ENCODE measurements at regions of chr14 and their contacts with region 1.

Region 1: GRCh38 chr14:55411426-55412389 is at the start of gene ATG14:
- DNase-seq: peak; percentile 73
- ATAC-seq: peak; percentile 99
- H3K4me3 Mint-ChIP-seq: peak within 1 kb of the TSS; percentile 93
- H3K27ac Mint-ChIP-seq: peak within 1 kb of the TSS; percentile 76
- H3K4me1 Mint-ChIP-seq: peaks cover 32% of the 10 kb centered on the region
- H3K27me3 Mint-ChIP-seq: peaks cover 12% of the 10 kb centered on the region
- CTCF ChIP-seq: no peak
- total RNA-seq, gene ATG14: 9.7 and 12.1 TPM in 2 replicates

Region 2: DNA sequence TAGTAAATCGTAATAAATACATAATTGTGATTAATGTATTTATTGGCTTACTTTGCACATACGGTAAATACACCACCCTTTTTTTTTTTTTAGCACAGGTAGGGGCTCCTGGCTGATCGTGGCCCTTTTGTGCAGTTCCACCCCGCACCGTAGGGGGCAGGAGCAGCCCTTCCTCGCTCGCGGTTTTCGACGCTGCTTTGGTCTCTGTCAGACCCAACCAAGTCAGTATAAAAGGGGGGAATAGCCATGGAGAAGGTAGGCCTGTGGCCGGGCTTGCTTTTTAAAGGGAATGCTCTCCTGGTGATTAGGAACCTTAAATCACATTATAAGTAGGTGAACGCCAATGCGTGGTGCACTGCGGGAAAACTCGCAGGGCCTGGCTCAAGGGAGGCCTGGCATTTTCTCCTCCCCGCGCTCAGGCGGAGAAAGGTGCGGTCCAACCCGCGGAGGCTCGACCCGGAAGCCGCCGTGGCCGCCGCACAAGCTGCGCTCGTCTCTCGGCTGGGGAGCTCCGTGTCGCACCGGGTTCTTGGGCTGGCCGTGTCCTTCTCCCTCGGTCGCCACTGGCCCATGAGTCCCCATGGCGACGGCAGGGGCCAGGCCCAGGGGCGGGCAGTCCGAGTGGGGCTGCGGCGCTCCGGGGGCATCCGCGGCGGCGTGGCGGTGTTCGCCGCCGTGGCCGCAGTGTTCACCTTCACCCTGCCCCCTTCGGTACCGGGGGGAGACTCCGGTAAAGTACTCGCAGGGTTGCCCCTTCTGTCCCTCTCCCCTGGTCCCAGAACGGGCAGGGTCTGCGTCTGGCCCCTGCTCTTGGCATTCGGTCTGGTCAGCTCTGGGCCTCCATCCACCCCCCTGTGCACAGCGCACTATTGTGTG is 1167.9 kb after region 1 on chr14 and contains the start of gene TMEM260:
- CTCF ChIA-PET with region 1: no interaction called
- POLR2A ChIA-PET with region 1: no interaction called
- intact Hi-C with region 1: loop called (anchors 5 kb)
- DNase-seq: peak; percentile 87
- ATAC-seq: peak; percentile 94
- H3K4me3 Mint-ChIP-seq: peak within 1 kb of the TSS; percentile 90
- H3K27ac Mint-ChIP-seq: peak within 1 kb of the TSS; percentile 96
- H3K4me1 Mint-ChIP-seq: peaks cover 35% of the 10 kb centered on the region
- H3K27me3 Mint-ChIP-seq: no peaks in the 10 kb centered on the region
- CTCF ChIP-seq: peak; percentile 78
- total RNA-seq, gene TMEM260: 22.0 and 24.7 TPM in 2 replicates